Psoas muscle (tissue), 8 donors: ENCODE measurements at regions of chr1 and their contacts with region 1.

Region 1: DNA sequence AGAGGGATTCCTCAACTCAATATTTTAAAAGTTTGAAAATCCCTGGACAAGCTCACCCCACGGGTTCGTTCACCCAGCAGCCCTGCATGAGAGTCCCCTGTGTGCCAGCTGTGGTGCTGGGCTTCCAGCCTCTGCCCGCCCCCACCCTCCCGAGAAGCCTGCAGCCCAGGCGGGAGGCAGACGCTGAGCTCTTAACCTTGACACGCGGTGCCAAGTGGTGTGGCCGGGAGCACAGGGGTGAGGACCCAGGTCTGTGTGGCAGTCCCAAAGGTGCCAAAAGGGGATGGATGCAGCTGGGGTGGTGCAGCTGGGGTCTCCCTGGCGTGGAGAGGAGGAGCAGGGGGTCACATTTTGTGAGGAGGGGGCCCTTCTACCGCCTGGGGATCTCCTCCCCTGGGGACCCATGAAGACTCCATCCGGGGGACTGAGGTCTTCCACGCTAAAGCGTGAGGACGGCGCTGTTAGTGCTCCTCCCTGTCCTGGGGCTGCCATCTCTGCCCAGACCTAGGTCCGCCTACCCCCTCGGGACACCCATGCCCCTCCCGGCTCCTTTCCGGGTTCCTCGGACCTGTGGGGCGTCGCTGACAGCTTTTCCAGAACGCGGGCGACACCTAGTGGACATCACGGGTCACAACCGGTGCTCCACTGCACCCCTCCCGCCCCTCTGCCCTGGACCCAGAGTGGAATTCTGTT is 12.9 kb downstream of the PLA2G2F start:
- DNase-seq: peak; percentile 84 to 93
- ATAC-seq: peak; percentile 89 to 94 (median 90)
- H3K4me3 ChIP-seq: peak overlapping the region; percentile 49
- H3K27ac ChIP-seq: no peak overlapping the region
- H3K4me1 ChIP-seq: peaks cover 5% of the 10 kb centered on the region
- H3K27me3 ChIP-seq: peaks cover 0 to 5% (median 0%) of the 10 kb centered on the region in 3 donors
- CTCF ChIP-seq: peak; percentile 95

Region 2: DNA sequence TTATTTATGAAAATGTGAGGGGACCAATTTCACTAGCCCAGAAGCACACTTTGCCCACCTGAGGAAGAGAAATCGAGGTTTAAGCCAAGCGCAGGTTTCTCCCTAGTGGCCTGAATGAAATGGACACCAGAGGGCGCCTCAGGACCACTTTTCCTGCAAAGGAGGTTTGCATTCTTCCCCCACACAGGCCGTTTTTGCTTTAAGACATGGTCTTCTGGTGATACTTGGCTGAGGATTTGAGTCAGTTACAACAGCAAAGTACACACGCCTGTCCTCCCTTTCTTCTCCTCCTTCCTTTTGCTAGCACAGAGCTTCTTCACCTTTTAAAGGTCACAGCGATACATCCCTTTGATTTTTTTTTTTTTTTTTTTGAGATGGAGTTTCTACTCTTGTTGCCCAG is 234.0 kb before region 1 on chr1:
- intact Hi-C with region 1: loop called (anchors 1 kb)
- DNase-seq: peak; percentile 76 to 86
- ATAC-seq: peak; percentile 58 to 90 (median 72)
- H3K4me3 ChIP-seq: no peak overlapping the region
- H3K27ac ChIP-seq: no peak overlapping the region
- H3K4me1 ChIP-seq: no peaks in the 10 kb centered on the region
- H3K27me3 ChIP-seq: peaks cover 0 to 4% (median 0%) of the 10 kb centered on the region in 3 donors
- CTCF ChIP-seq: peak; percentile 88

Region 3: GRCh38 chr1:19974822-19975416 is 177.1 kb before region 1 on chr1:
- intact Hi-C with region 1: loop called (anchors 2 to 5 kb)
- DNase-seq: peak; percentile 42 to 60
- ATAC-seq: peak; percentile 57 to 82 (median 80)
- H3K4me3 ChIP-seq: no peak overlapping the region
- H3K27ac ChIP-seq: no peak overlapping the region
- H3K4me1 ChIP-seq: no peaks in the 10 kb centered on the region
- H3K27me3 ChIP-seq: peaks cover 0 to 30% (median 0%) of the 10 kb centered on the region in 3 donors
- CTCF ChIP-seq: peak; percentile 67

Region 4: DNA sequence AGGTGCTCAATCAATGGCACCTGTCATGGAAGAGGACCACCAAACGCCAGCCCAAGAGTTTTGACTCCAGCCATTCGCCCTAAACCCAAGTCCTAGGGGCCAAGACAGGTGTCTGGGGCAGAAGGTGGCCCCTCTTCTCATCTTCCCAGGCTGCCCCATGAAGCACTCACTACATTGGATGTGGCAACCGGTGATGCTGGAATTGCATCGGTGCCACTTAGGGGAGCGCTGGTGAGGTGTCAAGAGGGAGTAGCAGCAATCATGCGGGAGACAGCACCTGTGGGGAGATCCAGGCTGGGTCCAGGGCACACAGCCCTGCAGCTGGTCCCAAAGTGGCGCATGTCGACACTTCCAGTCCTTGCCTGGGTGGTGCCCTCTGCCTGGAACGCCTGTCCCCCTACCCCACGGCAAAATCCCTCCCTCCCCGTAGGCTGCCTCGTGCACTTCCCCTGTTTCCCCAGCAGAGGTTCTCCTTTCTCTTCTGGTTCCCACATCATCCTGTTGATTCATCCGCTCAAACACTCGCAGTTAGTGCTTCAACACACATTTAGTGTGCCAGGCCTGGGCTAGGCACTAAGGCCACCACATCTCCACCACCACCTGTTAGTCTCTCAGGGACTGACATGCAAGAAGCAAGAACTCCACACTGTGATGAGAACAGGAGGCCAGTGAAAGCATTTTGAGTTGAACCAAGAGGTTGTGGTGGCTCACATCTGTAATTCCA is 51.3 kb before region 1 on chr1:
- intact Hi-C with region 1: loop called in 1 of 2 experiments (anchors 5 kb)
- DNase-seq: no peak
- ATAC-seq: peak; percentile 64 to 78 (median 70)
- H3K4me3 ChIP-seq: no peak overlapping the region
- H3K27ac ChIP-seq: no peak overlapping the region
- H3K4me1 ChIP-seq: no peaks in the 10 kb centered on the region
- H3K27me3 ChIP-seq: no peaks in the 10 kb centered on the region
- CTCF ChIP-seq: peak; percentile 54

Region 5: GRCh38 chr1:20199403-20199802 is 47.4 kb after region 1 on chr1:
- intact Hi-C with region 1: no loop called
- DNase-seq: no peak
- ATAC-seq: no peak
- H3K4me3 ChIP-seq: no peak overlapping the region
- H3K27ac ChIP-seq: no peak overlapping the region
- H3K4me1 ChIP-seq: peaks cover 4% of the 10 kb centered on the region
- H3K27me3 ChIP-seq: peaks cover 0 to 2% (median 0%) of the 10 kb centered on the region in 3 donors
- CTCF ChIP-seq: no peak